B cell (primary cell): ENCODE measurements at regions of chr18 and their contacts with region 1.

Region 1: DNA sequence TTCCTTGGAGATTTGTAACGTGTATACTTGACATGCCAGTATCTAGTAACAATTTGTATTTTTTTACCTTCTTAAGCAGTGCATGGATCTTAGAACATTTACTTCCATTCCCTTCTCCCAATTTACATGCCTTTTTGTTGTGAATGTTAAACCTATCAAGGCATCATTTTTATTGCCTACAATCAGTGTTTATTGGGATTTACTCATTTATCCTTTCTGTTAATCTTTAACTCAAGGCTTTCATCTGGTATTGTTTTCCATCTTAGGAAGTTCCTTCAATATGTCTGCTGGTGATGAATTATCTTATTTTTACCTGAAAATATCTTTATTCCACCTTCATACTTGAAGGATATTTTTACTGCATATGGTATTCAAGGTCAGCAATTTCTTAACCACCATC is 88.5 kb upstream of the EMILIN2 start:
- DNase-seq: no peak
- ATAC-seq: no peak
- H3K4me3 ChIP-seq: no peak overlapping the region
- H3K4me3 Mint-ChIP-seq: no peak overlapping the region
- H3K27ac ChIP-seq: peak overlapping the region in 1 of 2 donors; percentile 28
- H3K27ac Mint-ChIP-seq: no peak overlapping the region
- H3K4me1 ChIP-seq: no peaks in the 10 kb centered on the region
- H3K4me1 Mint-ChIP-seq: peaks cover 3% of the 10 kb centered on the region
- H3K27me3 ChIP-seq: no peaks in the 10 kb centered on the region
- H3K27me3 Mint-ChIP-seq: no peaks in the 10 kb centered on the region
- CTCF ChIP-seq: no peak

Region 2: DNA sequence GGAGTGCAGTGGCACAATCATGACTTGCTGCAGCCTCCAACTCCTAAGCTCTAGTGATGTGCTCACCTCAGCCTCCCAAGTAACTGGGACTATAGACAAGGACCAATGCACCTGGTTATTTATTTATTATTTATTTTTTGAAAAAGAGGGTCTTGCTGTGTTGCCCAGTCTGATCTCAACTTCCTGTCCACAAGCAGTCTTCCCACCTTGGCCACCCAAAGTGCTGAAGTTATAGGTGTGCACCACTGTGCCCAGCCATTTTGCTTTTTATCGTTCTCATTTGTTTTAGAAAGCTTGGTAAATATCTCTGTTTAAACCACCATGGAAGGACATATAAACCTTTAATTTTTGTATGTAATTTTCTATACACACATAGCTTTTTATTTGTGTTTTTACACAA is 28.6 kb before region 1 on chr18:
- CTCF ChIA-PET with region 1: no interaction called
- POLR2A ChIA-PET with region 1: no interaction called
- intact Hi-C with region 1: loop called (anchors 5 kb)
- DNase-seq: no peak
- ATAC-seq: no peak
- H3K4me3 ChIP-seq: no peak overlapping the region
- H3K4me3 Mint-ChIP-seq: no peak overlapping the region
- H3K27ac ChIP-seq: no peak overlapping the region
- H3K27ac Mint-ChIP-seq: no peak overlapping the region
- H3K4me1 ChIP-seq: no peaks in the 10 kb centered on the region
- H3K4me1 Mint-ChIP-seq: no peaks in the 10 kb centered on the region
- H3K27me3 ChIP-seq: no peaks in the 10 kb centered on the region
- H3K27me3 Mint-ChIP-seq: no peaks in the 10 kb centered on the region
- CTCF ChIP-seq: no peak